ENCODE measurements at regions of chr2 and their contacts with region 1.

Region 1: DNA sequence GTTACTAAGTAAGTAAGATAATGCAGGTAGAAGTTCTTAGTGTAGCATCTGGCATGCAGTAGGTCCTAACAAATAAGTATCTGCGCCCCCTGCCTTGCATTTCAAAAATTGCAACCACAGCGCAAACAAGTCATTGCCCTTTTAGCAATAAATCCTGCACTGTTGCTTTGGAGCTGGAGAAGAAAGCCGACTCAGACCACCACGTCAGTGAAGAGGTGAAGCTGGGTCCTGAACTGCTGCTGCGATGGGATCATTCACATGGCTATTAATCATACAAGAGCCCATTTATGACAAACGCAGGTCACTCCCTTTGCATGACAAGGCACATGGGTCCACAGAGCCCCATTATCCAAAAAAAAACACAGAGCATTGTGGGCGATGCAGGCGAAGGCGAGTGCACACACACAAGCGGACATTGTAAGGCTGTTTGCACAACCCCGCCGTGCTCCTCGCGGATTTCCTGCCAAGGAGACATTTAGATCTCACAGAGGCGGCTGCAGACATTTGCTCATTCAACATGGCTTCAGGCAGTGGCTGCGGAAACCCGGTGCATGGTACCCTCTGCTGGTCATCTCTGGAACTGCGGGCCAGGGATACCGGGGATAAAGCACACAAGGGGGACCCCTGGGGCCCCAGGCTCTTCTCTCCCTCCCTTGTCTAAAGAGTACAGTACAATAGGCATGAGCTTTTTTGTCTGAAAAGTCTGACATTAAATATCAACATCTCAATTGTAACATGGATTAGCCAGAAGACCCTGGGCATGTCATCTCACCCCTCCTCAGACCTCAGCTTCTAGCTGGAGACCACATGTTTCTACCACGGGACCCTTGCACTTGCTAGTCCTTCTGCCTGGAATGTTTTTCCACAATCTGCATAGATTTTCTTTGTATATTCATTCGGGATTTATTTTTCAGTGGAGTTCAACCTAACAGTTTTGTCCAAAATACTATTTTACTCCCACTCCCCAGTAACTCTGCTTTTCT is 56.7 kb downstream of the CYRIA start:
- DNase-seq: peak; percentile 89
- H3K4me3 ChIP-seq: peak overlapping the region; percentile 59 to 86
- H3K27ac ChIP-seq: peak overlapping the region in 1 of 2 experiments; percentile 79; a peak in 2 of 4 replicates
- H3K4me1 ChIP-seq: peaks cover 4 to 5% of the 10 kb centered on the region in 2 experiments; a peak in 2 of 4 replicates
- H3K27me3 ChIP-seq: no peaks in the 10 kb centered on the region
- CTCF ChIP-seq: peak; percentile 89
- EP300 ChIP-seq: no peak; a peak in 1 of 4 replicates
- RAD21 ChIP-seq: peak; percentile 91

Region 2: DNA sequence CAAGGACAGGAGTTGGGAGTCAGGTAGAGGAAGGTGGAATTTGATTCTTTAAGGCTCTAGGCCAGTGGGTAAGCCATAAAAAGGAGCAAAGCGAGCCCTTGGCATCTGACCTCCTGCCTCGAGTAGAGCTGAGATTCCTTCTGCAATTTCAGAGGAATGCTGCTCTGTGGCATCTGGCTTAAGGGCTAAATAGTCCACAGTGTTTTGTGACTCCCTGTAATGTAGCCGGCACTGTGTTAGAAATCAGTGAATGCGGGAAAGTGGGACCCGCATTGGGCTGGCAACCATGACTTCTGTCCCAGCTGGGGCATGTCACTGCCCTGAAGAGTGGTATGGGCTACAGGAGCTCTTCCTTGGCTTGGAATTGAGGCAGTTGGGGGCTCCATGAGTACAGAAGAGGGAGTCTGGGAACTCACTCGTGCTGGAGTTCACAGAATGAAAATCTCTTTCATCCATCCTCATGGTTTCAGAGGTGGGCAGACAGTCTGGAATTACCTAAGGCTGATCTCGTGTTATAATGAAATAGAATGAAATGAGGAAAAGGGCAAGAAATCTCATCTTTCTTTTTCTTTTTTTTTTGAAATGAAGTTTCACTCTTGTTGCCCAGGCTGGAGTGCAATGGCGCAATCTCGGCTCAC is 681.3 kb before region 1 on chr2:
- CTCF ChIA-PET with region 1: interaction called, 14 read pairs
- POLR2A ChIA-PET with region 1: no interaction called
- DNase-seq: no peak
- H3K4me3 ChIP-seq: no peak overlapping the region
- H3K27ac ChIP-seq: no peak overlapping the region
- H3K4me1 ChIP-seq: no peaks in the 10 kb centered on the region
- H3K27me3 ChIP-seq: no peaks in the 10 kb centered on the region
- CTCF ChIP-seq: no peak
- EP300 ChIP-seq: no peak
- RAD21 ChIP-seq: no peak

Region 3: DNA sequence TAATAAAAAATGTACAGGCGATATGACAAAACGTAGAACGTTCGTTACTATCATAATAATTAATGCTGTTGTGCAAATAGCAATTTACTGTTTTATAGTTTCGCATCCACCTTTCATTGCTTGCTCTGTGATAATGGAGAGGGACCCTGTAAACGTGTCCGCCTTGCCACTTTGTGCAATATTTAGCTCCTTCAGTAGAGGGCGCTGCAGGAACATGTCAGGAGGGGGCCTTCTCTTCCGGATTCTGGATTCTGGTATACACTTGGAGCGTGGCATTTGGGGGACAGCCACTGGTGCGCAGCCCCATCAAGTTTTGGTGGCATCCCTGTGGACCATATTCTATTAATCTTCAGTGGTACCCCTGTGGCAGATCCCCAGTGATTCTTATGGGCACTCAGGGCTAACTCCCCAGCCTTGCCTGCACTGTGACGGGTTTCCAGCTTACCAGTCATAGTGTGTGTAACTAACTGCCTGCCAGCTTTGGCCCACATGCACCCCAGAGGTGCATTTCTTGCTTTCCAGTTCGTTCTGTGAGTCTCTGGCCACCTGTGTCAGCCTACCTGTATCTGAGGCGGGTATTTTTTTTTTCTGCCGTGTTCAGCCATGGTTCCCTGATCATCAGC is 83.6 kb before region 1 on chr2:
- CTCF ChIA-PET with region 1: interaction called, 36 read pairs
- POLR2A ChIA-PET with region 1: no interaction called
- DNase-seq: peak; percentile 37
- H3K4me3 ChIP-seq: peak overlapping the region in 1 of 2 experiments; percentile 40; a peak in 1 of 4 replicates
- H3K27ac ChIP-seq: no peak overlapping the region
- H3K4me1 ChIP-seq: peaks cover 0 to 22% of the 10 kb centered on the region in 2 experiments; a peak in 2 of 4 replicates
- H3K27me3 ChIP-seq: no peaks in the 10 kb centered on the region
- CTCF ChIP-seq: peak; percentile 44
- EP300 ChIP-seq: no peak
- RAD21 ChIP-seq: peak; percentile 59

Region 4: DNA sequence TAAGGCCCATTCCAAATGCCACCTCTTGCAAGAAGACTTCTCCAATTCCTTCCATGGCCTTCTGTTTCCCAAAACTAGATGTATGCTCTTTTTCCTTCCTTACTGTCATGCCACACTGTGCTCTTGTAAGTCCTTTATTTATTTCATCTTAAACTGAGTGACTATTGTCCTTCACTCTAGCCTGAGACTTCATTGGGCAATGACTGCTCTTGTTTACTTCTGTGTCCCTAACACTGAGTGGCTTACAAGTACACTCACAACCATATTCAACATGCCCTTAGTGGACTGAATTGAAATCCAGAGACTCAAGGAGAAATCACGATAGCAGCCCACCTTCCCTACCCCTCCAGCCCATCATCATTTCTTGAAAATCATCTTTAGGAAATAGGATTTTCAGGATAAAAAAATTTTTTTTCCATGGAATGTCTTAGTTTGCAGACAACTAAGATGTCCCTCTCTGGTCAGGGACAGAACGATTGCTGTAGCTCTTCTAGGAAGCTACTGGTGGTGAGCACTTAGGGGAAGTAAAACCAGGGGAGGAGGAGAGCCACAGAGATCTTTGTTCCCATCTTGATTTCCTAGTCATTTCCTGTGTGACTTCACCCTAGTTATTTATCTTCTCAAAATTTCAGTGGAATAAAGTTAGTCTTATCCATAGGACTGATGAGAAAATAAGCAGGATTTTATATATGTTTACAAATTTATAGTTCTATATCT is 24.0 kb before region 1 on chr2:
- CTCF ChIA-PET with region 1: interaction called, 25 read pairs
- POLR2A ChIA-PET with region 1: no interaction called
- DNase-seq: no peak
- H3K4me3 ChIP-seq: no peak overlapping the region
- H3K27ac ChIP-seq: no peak overlapping the region
- H3K4me1 ChIP-seq: no peaks in the 10 kb centered on the region
- H3K27me3 ChIP-seq: no peaks in the 10 kb centered on the region
- CTCF ChIP-seq: no peak
- EP300 ChIP-seq: no peak
- RAD21 ChIP-seq: no peak

Region 5: GRCh38 chr2:16656784-16657391 is 47.9 kb after region 1 on chr2:
- CTCF ChIA-PET with region 1: interaction called, 39 read pairs
- POLR2A ChIA-PET with region 1: no interaction called
- DNase-seq: no peak
- H3K4me3 ChIP-seq: no peak overlapping the region
- H3K27ac ChIP-seq: no peak overlapping the region
- H3K4me1 ChIP-seq: peaks cover 0 to 21% of the 10 kb centered on the region in 2 experiments; a peak in 2 of 4 replicates
- H3K27me3 ChIP-seq: no peaks in the 10 kb centered on the region
- CTCF ChIP-seq: no peak
- EP300 ChIP-seq: no peak
- RAD21 ChIP-seq: no peak

Region 6: DNA sequence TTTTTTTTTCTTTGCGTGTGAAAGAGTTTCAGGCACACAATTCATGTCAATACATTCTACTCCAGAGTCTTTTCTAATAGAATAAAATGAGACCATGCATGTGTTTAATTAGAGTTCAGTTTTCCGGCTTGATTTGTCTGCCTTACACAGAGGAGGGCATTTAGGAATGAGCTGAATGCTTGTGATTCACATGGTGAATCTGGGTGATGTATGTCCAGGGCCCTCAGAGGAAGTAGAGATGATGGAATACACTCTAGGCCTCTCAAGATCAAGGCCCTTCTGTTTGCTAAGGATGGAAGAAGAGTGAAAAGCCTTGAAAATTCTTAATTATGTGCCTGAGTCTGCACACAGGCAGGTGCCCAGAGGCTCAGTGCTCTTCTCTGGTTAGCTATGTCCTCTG is 127.7 kb after region 1 on chr2:
- CTCF ChIA-PET with region 1: interaction called, 12 read pairs
- POLR2A ChIA-PET with region 1: no interaction called
- DNase-seq: no peak
- H3K4me3 ChIP-seq: no peak overlapping the region
- H3K27ac ChIP-seq: no peak overlapping the region
- H3K4me1 ChIP-seq: no peaks in the 10 kb centered on the region
- H3K27me3 ChIP-seq: no peaks in the 10 kb centered on the region
- CTCF ChIP-seq: no peak
- EP300 ChIP-seq: no peak
- RAD21 ChIP-seq: no peak

Region 7: GRCh38 chr2:16773080-16773713 is 164.2 kb after region 1 on chr2:
- CTCF ChIA-PET with region 1: interaction called, 27 read pairs
- POLR2A ChIA-PET with region 1: no interaction called
- DNase-seq: peak; percentile 67
- H3K4me3 ChIP-seq: no peak overlapping the region; a peak in 1 of 4 replicates
- H3K27ac ChIP-seq: no peak overlapping the region
- H3K4me1 ChIP-seq: peaks cover 0 to 5% of the 10 kb centered on the region in 2 experiments; a peak in 2 of 4 replicates
- H3K27me3 ChIP-seq: no peaks in the 10 kb centered on the region
- CTCF ChIP-seq: peak; percentile 74
- EP300 ChIP-seq: peak in 1 of 2 experiments; percentile 38; a peak in 1 of 4 replicates
- RAD21 ChIP-seq: peak; percentile 100

Measured in SK-N-SH (cell line).